Esophagus muscularis mucosa (tissue), 4 donors: ENCODE measurements at regions of chr4 and their contacts with region 1.

Region 1: DNA sequence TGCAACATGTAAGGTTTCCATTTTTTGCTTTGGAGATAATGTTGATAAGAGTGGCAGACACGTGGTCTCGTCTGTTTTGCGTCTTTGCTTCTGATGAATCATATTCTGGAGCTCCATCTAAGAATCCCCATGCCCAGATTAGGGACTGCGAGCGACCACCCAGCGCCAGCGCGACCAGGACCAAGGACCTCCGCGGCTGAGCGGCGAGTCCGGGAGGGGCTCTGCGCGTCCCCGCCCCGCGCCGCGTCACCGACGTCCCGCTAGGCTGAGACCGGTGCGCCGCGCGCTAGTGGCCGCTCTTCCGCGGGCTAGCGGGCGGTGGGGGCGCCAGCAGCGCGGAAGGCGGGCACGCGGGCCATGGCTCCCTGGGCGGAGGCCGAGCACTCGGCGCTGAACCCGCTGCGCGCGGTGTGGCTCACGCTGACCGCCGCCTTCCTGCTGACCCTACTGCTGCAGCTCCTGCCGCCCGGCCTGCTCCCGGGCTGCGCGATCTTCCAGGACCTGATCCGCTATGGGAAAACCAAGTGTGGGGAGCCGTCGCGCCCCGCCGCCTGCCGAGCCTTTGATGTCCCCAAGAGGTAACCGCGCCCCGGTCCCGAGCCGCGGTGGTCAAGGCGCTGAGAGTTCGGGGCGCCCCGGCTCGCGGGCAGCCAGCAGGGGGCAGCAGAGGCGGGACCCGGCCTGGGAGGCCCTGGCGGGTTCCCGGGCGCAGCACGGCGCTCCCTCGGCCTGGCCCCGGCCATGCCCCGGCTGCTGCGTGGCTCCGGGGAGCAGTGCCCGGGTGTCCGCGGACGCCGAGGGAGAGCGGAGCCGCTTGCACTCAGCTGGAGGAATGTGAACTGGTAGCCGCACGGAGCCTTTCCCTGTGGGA is at the start of gene SRD5A3:
- DNase-seq: peak; percentile 93
- H3K4me3 ChIP-seq: peak within 1 kb of the TSS; percentile 70 to 84 (median 78)
- H3K27ac ChIP-seq: peak within 1 kb of the TSS; percentile 93 to 98 (median 96)
- H3K4me1 ChIP-seq: peaks cover 19 to 37% (median 29%) of the 10 kb centered on the region in 4 donors
- H3K27me3 ChIP-seq: no peaks in the 10 kb centered on the region
- CTCF ChIP-seq: peak; percentile 87 to 96 (median 94)
- EP300 ChIP-seq: no peak
- POLR2A ChIP-seq: no peak
- total RNA-seq, gene SRD5A3: 3.0 to 7.9 (median 5.2) TPM

Region 2: GRCh38 chr4:54109241-54110018 is 1236.8 kb before region 1 on chr4:
- intact Hi-C with region 1: no loop called
- DNase-seq: no peak
- H3K4me3 ChIP-seq: peak overlapping the region in 3 of 4 donors; percentile 0 to 35 (median 29)
- H3K27ac ChIP-seq: no peak overlapping the region
- H3K4me1 ChIP-seq: peaks cover 13 to 20% (median 16%) of the 10 kb centered on the region in 4 donors
- H3K27me3 ChIP-seq: peaks cover 0 to 76% (median 26%) of the 10 kb centered on the region in 4 donors
- CTCF ChIP-seq: no peak
- EP300 ChIP-seq: no peak
- POLR2A ChIP-seq: no peak

Region 3: DNA sequence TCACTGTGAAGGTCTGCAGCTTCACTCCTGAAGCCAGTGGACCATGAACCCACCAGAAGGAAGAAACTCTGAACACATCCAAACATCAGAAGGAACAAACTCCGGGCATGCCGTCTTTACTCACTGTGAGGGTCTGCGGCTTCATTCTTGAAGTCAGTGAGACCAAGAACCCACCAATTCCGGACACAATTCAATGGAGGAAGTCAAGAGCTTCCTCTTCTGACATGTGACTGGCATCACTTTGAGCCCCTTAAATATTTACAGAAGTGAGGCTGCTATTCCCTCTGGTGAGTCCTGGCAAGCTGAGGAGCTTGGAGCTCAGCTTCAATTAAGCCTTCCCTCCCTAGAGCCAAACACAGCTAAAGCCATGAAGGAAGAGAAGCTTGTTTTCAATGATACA is 103.7 kb before region 1 on chr4:
- intact Hi-C with region 1: no loop called
- DNase-seq: no peak
- H3K4me3 ChIP-seq: no peak overlapping the region
- H3K27ac ChIP-seq: no peak overlapping the region
- H3K4me1 ChIP-seq: no peaks in the 10 kb centered on the region
- H3K27me3 ChIP-seq: no peaks in the 10 kb centered on the region
- CTCF ChIP-seq: no peak
- EP300 ChIP-seq: no peak
- POLR2A ChIP-seq: no peak

Region 4: DNA sequence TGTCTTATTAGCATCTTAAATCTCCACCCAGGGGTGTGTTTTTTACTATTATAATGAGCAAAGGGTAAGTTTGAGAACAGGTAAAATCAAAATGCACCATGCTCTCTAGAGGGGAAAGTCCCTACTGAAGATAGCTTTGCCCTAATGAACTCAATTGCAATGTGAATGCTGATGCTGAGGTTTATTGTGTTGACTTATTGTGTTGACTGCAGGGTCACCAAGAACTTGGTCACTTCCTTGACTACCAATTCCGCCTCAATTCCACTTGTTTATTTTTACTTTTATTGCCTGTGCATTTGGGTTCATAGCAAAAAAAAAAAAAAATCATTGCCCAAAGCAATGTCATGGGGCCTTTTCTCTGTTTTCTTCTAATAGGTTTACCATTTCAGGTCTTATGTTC is 67.9 kb before region 1 on chr4:
- intact Hi-C with region 1: no loop called
- DNase-seq: no peak
- H3K4me3 ChIP-seq: no peak overlapping the region
- H3K27ac ChIP-seq: no peak overlapping the region
- H3K4me1 ChIP-seq: no peaks in the 10 kb centered on the region
- H3K27me3 ChIP-seq: no peaks in the 10 kb centered on the region
- CTCF ChIP-seq: no peak
- EP300 ChIP-seq: no peak
- POLR2A ChIP-seq: no peak

Region 5: GRCh38 chr4:55395529-55396307 is 49.5 kb after region 1 on chr4 and contains the start of gene TMEM165:
- intact Hi-C with region 1: loop called (anchors 2 kb)
- DNase-seq: peak; percentile 96
- H3K4me3 ChIP-seq: peak within 1 kb of the TSS; percentile 88 to 100 (median 96)
- H3K27ac ChIP-seq: peak within 1 kb of the TSS; percentile 94 to 100 (median 100)
- H3K4me1 ChIP-seq: peaks cover 25 to 41% (median 39%) of the 10 kb centered on the region in 4 donors
- H3K27me3 ChIP-seq: no peaks in the 10 kb centered on the region
- CTCF ChIP-seq: peak in 1 of 3 experiments; percentile 17
- EP300 ChIP-seq: no peak
- POLR2A ChIP-seq: peak; percentile 97
- total RNA-seq, gene TMEM165: 133 to 193 (median 168) TPM

Region 6: DNA sequence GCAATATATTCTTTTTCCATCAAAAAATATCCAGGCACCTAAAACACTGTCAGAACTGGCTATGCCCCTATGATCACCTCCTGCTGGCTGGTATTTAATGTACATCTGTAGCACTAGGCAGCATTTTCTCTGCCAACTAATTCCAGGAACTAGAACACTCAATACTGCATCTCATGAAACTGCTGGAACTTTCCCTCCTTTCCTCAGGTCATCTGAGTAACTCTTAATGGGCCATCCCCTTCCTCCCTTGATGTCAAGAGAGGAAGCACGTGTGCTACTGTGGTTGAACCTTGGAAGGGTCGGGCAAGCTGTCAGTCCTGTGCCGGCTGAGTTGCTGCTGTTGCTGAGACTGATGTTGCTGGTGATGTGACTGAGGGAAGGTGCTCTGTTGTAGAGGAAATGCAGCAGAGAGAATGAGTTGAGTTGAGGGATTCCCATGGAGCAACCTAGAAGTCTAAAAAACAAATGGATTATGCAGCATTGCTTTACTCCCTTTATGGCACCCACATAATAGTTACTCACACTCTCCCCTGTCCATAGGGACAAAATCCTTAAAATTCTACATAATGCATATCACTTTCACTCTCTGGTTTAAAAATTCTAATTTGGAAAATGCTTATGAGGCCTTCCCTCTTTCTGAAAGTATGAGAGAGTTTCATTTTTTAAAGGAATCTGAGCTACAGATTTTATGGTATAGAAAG is 89.1 kb after region 1 on chr4:
- intact Hi-C with region 1: loop called (anchors 10 kb)
- DNase-seq: no peak
- H3K4me3 ChIP-seq: no peak overlapping the region
- H3K27ac ChIP-seq: peak overlapping the region in 2 of 4 donors; percentile 40 to 51
- H3K4me1 ChIP-seq: peaks cover 0 to 12% (median 9%) of the 10 kb centered on the region in 4 donors
- H3K27me3 ChIP-seq: no peaks in the 10 kb centered on the region
- CTCF ChIP-seq: peak in 2 of 3 experiments; percentile 22 to 35
- EP300 ChIP-seq: no peak
- POLR2A ChIP-seq: no peak

Region 7: DNA sequence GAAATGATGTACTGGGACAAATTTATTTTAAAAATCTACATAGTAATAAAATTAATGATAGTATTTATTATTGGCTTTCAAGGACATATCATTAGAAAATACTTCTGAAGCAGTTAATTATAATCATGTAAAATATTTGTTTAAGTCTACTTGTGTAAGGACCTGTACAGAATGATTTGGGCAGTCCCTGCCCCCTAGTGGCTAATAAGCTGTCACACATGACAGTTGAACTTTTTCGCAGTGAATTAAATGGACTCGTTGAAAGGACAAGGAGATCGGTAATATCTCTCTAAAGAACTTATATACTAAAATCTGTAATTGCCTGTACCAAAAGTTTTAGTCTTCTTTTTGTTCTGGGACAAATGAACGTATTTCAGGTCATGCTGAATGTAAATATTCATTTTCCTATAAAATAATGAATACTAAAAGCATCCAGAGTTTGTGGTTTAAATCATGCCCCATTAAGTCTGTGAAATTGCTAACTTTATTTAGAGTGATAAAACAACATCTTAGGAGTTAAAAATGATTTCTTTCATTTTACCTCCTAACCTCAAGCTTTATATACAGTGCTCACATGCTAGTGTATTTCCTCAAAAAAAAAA is 520.9 kb after region 1 on chr4:
- intact Hi-C with region 1: loop called (anchors 5 kb)
- DNase-seq: no peak
- H3K4me3 ChIP-seq: no peak overlapping the region
- H3K27ac ChIP-seq: peak overlapping the region; percentile 22 to 67 (median 58)
- H3K4me1 ChIP-seq: peaks cover 10 to 18% (median 18%) of the 10 kb centered on the region in 4 donors
- H3K27me3 ChIP-seq: no peaks in the 10 kb centered on the region
- CTCF ChIP-seq: peak; percentile 62 to 83 (median 69)
- EP300 ChIP-seq: no peak
- POLR2A ChIP-seq: no peak